Endothelial cell of umbilical vein (primary cell): ENCODE measurements at regions of chr2 and their contacts with region 1.

Region 1: GRCh38 chr2:43569921-43570320 is 25.9 kb downstream of the THADA start:
- DNase-seq: no peak
- H3K4me3 ChIP-seq: no peak overlapping the region
- H3K27ac ChIP-seq: no peak overlapping the region
- H3K4me1 ChIP-seq: no peaks in the 10 kb centered on the region
- H3K27me3 ChIP-seq: no peaks in the 10 kb centered on the region
- CTCF ChIP-seq: no peak
- POLR2A ChIP-seq: no peak

Region 2: GRCh38 chr2:43556256-43556655 is 13.7 kb before region 1 on chr2:
- CTCF ChIA-PET with region 1: interaction called, 18 read pairs
- POLR2A ChIA-PET with region 1: interaction called, 6 read pairs
- dilution Hi-C with region 1: no loop called
- intact Hi-C with region 1: no loop called
- DNase-seq: no peak
- H3K4me3 ChIP-seq: no peak overlapping the region
- H3K27ac ChIP-seq: no peak overlapping the region
- H3K4me1 ChIP-seq: no peaks in the 10 kb centered on the region
- H3K27me3 ChIP-seq: no peaks in the 10 kb centered on the region
- CTCF ChIP-seq: no peak
- POLR2A ChIP-seq: no peak

Region 3: DNA sequence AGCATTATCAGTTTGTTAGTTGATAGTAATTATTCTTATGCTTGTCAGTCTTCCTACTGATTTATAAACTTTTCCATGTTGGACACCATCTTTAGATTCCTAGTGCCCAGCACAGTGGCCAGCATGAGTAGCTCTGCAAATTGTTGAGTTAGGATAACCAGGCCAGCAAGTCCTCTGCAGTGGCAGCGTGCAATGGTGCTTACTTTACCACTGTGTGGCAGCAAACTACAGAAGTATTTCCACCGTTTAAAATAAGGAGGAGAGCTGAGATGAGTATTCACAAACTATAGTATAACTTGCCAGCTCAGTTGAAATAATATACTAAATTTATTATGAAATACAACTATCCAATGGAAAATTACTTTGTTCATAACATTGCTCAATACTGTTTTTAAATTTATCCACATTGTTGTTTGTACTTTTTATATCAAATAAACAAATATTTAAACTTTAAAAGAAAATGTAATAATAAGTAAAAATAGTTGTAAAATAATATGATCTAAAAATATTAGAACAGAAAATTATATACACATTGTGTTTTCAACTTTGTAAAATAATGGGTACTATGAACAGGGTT is 35.2 kb after region 1 on chr2:
- CTCF ChIA-PET with region 1: interaction called, 10 read pairs
- POLR2A ChIA-PET with region 1: no interaction called
- dilution Hi-C with region 1: no loop called
- intact Hi-C with region 1: no loop called
- DNase-seq: peak; percentile 43
- H3K4me3 ChIP-seq: no peak overlapping the region
- H3K27ac ChIP-seq: no peak overlapping the region
- H3K4me1 ChIP-seq: no peaks in the 10 kb centered on the region
- H3K27me3 ChIP-seq: no peaks in the 10 kb centered on the region
- CTCF ChIP-seq: peak; percentile 39 to 46
- POLR2A ChIP-seq: no peak